CD8-positive, alpha-beta T cell (primary cell): ENCODE measurements at regions of chr6 and their contacts with region 1.

Region 1: GRCh38 chr6:166627033-166627874 is at the start of gene RPS6KA2:
- DNase-seq: peak; percentile 99 to 100 (median 100)
- ATAC-seq: peak; percentile 91
- H3K4me3 ChIP-seq: peak within 1 kb of the TSS; percentile 70 to 80
- H3K4me3 Mint-ChIP-seq: peak within 1 kb of the TSS; percentile 94
- H3K27ac ChIP-seq: peak within 1 kb of the TSS; percentile 32 to 54
- H3K27ac Mint-ChIP-seq: peak within 1 kb of the TSS; percentile 84
- H3K4me1 ChIP-seq: peaks cover 17% of the 10 kb centered on the region
- H3K4me1 Mint-ChIP-seq: peaks cover 17% of the 10 kb centered on the region
- H3K27me3 ChIP-seq: peaks cover 0 to 4% of the 10 kb centered on the region in 2 experiments
- H3K27me3 Mint-ChIP-seq: peaks cover 36% of the 10 kb centered on the region
- CTCF ChIP-seq: no peak
- total RNA-seq, gene RPS6KA2: 2.2 TPM

Region 2: DNA sequence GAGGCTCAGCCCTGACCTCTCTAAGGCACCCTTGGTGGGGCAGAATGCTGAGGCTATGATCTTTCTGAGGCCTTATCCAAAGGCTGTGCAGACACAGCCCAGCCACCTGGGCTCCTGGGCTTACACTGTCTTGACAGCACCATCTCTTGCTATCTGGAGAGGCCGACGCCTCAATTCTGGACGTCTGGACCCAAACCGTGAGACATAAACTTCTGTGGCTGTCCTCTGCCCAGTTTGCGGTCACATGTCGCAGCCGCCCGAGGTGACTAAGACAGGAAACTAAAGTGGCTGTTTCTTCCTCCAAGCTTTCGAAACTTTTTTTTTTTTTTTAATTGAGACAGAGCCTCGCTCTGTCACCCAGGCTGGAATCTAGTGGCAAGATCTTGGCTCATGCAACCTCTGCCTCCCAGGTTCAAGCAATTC is 368.4 kb before region 1 on chr6:
- CTCF ChIA-PET with region 1: no interaction called
- POLR2A ChIA-PET with region 1: interaction called, 4 read pairs
- intact Hi-C with region 1: loop called in 1 of 2 experiments (anchors 5 kb)
- DNase-seq: peak in 7 of 9 experiments; percentile 29 to 72 (median 54)
- ATAC-seq: peak; percentile 66
- H3K4me3 ChIP-seq: no peak overlapping the region
- H3K4me3 Mint-ChIP-seq: peak overlapping the region; percentile 73
- H3K27ac ChIP-seq: no peak overlapping the region
- H3K27ac Mint-ChIP-seq: peak overlapping the region; percentile 96
- H3K4me1 ChIP-seq: peaks cover 20% of the 10 kb centered on the region
- H3K4me1 Mint-ChIP-seq: peaks cover 50% of the 10 kb centered on the region
- H3K27me3 ChIP-seq: no peaks in the 10 kb centered on the region
- H3K27me3 Mint-ChIP-seq: no peaks in the 10 kb centered on the region
- CTCF ChIP-seq: no peak

Region 3: GRCh38 chr6:166313255-166314070 is 313.8 kb before region 1 on chr6:
- CTCF ChIA-PET with region 1: no interaction called
- POLR2A ChIA-PET with region 1: no interaction called
- intact Hi-C with region 1: loop called in 1 of 2 experiments (anchors 5 kb)
- DNase-seq: peak in 8 of 9 experiments; percentile 18 to 76 (median 58)
- ATAC-seq: peak; percentile 98
- H3K4me3 ChIP-seq: no peak overlapping the region
- H3K4me3 Mint-ChIP-seq: no peak overlapping the region
- H3K27ac ChIP-seq: no peak overlapping the region
- H3K27ac Mint-ChIP-seq: no peak overlapping the region
- H3K4me1 ChIP-seq: peaks cover under 1% of the 10 kb centered on the region
- H3K4me1 Mint-ChIP-seq: no peaks in the 10 kb centered on the region
- H3K27me3 ChIP-seq: peaks cover 0 to 2% of the 10 kb centered on the region in 2 experiments
- H3K27me3 Mint-ChIP-seq: peaks cover 18% of the 10 kb centered on the region
- CTCF ChIP-seq: peak; percentile 61

Region 4: GRCh38 chr6:166488076-166488685 is 139.1 kb before region 1 on chr6:
- CTCF ChIA-PET with region 1: interaction called, 3 read pairs
- POLR2A ChIA-PET with region 1: interaction called, 9 read pairs
- intact Hi-C with region 1: loop called (anchors 1 to 2 kb)
- DNase-seq: peak; percentile 61 to 95 (median 80)
- ATAC-seq: peak; percentile 95
- H3K4me3 ChIP-seq: peak overlapping the region; percentile 9 to 11
- H3K4me3 Mint-ChIP-seq: peak overlapping the region; percentile 77
- H3K27ac ChIP-seq: peak overlapping the region; percentile 64 to 84
- H3K27ac Mint-ChIP-seq: peak overlapping the region; percentile 99
- H3K4me1 ChIP-seq: peaks cover 19% of the 10 kb centered on the region
- H3K4me1 Mint-ChIP-seq: peaks cover 25% of the 10 kb centered on the region
- H3K27me3 ChIP-seq: no peaks in the 10 kb centered on the region
- H3K27me3 Mint-ChIP-seq: no peaks in the 10 kb centered on the region
- CTCF ChIP-seq: no peak

Region 5: GRCh38 chr6:166572370-166573261 is 54.6 kb before region 1 on chr6:
- CTCF ChIA-PET with region 1: no interaction called
- POLR2A ChIA-PET with region 1: no interaction called
- intact Hi-C with region 1: no loop called
- DNase-seq: peak in 1 of 9 experiments; percentile 44
- ATAC-seq: no peak
- H3K4me3 ChIP-seq: no peak overlapping the region
- H3K4me3 Mint-ChIP-seq: no peak overlapping the region
- H3K27ac ChIP-seq: no peak overlapping the region
- H3K27ac Mint-ChIP-seq: no peak overlapping the region
- H3K4me1 ChIP-seq: no peaks in the 10 kb centered on the region
- H3K4me1 Mint-ChIP-seq: no peaks in the 10 kb centered on the region
- H3K27me3 ChIP-seq: no peaks in the 10 kb centered on the region
- H3K27me3 Mint-ChIP-seq: no peaks in the 10 kb centered on the region
- CTCF ChIP-seq: no peak

Region 6: DNA sequence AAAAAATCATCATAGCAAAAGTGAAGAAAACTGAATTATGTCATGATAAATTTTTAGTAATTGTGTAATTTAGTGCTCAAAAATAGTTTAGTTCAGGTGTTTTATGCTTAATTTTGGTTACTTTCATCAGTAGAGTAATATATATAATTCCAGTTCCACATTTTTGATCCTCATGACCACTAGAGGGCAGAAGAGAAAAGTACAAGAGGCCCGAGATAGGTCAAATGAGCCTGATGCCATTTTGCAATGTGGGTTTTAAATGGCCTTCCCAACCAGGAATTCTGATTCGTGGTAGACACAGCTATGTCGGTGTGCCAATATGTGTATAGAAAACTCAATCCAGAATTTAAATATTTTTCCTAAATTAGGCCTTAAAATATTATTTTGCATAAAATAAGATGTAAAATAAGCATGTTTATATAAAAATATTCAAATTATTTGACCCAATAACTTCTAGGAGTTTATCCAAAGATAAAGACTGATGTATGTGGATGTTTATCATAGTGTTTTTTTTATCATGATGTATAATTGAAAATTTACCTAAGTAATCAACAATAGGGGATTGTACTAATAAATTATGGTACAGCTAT is 159.5 kb after region 1 on chr6:
- CTCF ChIA-PET with region 1: no interaction called
- POLR2A ChIA-PET with region 1: no interaction called
- intact Hi-C with region 1: loop called in 1 of 2 experiments (anchors 2 kb)
- DNase-seq: peak in 5 of 9 experiments; percentile 20 to 75 (median 48)
- ATAC-seq: peak; percentile 48
- H3K4me3 ChIP-seq: no peak overlapping the region
- H3K4me3 Mint-ChIP-seq: no peak overlapping the region
- H3K27ac ChIP-seq: no peak overlapping the region
- H3K27ac Mint-ChIP-seq: no peak overlapping the region
- H3K4me1 ChIP-seq: no peaks in the 10 kb centered on the region
- H3K4me1 Mint-ChIP-seq: no peaks in the 10 kb centered on the region
- H3K27me3 ChIP-seq: no peaks in the 10 kb centered on the region
- H3K27me3 Mint-ChIP-seq: peaks cover 3% of the 10 kb centered on the region
- CTCF ChIP-seq: peak; percentile 88

Region 7: DNA sequence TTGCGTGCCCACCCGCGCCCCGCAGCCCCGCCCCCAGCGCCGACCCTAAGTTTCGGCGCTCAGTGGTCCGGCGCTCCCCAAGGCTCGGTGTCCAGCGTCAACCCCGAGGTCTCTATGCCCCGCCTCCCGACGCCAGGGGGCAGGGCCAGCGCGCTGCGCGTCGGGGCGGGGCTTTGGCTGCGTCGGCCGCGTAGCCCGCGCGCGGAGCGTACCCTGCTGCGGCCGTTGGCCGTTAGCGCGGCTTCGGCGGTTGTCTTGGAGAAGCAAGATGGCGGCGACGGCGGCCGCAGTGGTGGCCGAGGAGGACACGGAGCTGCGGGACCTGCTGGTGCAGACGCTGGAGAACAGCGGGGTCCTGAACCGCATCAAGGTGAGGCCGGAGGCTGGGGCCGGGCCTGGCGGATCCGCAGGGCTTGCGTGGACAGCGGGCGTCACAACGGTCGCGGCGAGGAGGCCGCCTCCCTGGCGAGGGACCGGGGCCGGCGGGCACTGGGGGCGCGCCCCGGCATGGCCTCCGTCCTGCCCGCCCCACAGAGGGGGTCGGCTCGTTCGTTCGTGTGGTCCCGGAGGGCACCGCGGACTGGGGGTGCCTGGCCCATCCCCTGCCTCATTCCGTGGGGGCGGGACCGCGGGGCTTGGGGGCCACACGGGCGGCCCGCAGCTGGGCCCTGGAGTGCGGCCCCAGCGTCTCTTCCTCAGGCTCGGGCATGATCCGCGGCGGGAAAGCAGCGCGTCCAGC is 372.1 kb after region 1 on chr6 and contains the start of gene CEP43:
- CTCF ChIA-PET with region 1: no interaction called
- POLR2A ChIA-PET with region 1: no interaction called
- intact Hi-C with region 1: loop called (anchors 1 to 2 kb)
- DNase-seq: peak; percentile 80 to 95 (median 87)
- ATAC-seq: peak; percentile 92
- H3K4me3 ChIP-seq: peak within 1 kb of the TSS; percentile 63 to 99
- H3K4me3 Mint-ChIP-seq: peak within 1 kb of the TSS; percentile 86
- H3K27ac ChIP-seq: peak within 1 kb of the TSS; percentile 28 to 43
- H3K27ac Mint-ChIP-seq: peak within 1 kb of the TSS; percentile 77
- H3K4me1 ChIP-seq: peaks cover 20% of the 10 kb centered on the region
- H3K4me1 Mint-ChIP-seq: peaks cover 28% of the 10 kb centered on the region
- H3K27me3 ChIP-seq: no peaks in the 10 kb centered on the region
- H3K27me3 Mint-ChIP-seq: no peaks in the 10 kb centered on the region
- CTCF ChIP-seq: no peak
- total RNA-seq, gene CEP43: 5.7 to 8.7 TPM